ENCODE measurements at regions of chr19 and their contacts with region 1.

Region 1: DNA sequence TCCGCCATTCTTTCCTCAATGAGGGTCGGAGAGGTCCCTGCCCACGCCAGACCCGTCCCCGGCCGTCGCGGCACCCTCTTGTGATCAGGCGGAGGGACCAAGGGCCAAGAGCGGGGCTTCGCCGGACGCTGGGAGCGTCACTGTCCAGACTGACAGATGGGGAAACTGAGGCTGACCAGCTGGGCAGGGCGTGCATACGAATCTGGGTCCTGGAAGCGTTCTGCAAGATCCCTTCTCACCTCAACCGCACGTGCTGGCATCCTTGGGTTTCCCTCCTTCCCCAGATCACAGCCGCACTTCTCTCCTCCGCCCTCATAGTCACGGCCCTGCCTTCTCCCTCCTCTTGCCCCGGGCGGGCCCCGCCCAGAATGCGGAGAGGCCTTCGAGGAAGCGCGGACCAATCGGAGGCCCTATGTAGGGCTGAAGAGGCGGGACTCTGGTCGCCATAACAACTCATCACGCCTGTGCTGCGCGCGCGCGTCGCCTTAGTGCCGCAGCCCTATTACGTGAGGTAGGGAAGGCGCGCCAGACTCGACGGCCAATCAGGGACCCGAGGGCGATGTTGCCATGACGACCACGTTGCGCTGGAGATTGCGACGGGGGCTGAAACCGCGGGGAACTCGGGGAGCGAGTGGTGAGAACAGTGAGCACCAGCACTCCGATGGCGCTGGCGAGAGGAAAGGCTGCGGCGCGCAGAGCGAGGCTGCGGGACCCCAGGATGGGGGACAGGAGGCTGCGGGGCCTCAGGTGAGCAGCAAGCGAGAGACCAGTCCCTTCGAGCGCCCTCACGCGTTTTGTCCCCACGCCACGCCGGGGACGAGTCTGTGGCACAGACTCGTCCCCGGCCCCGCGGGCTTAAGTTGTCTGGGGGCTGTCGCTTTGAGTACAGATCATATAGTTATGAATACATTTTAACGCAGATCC is 5.7 kb downstream of the RNF225 start:
- DNase-seq: peak; percentile 100
- H3K4me3 ChIP-seq: peak overlapping the region; percentile 60 to 67 (median 65)
- H3K27ac ChIP-seq: peak overlapping the region; percentile 70 to 81 (median 70)
- H3K4me1 ChIP-seq: peaks cover 14 to 32% (median 27%) of the 10 kb centered on the region in 4 donors
- H3K27me3 ChIP-seq: peaks cover 0 to 18% (median 8%) of the 10 kb centered on the region in 4 donors
- CTCF ChIP-seq: peak in 1 of 3 experiments; percentile 17
- EP300 ChIP-seq: no peak
- POLR2A ChIP-seq: no peak

Region 2: GRCh38 chr19:58439576-58440554 is 38.7 kb after region 1 on chr19 and contains the start of gene ZNF132:
- intact Hi-C with region 1: loop called (anchors 5 kb)
- DNase-seq: peak; percentile 99
- H3K4me3 ChIP-seq: peak within 1 kb of the TSS; percentile 72 to 81 (median 74)
- H3K27ac ChIP-seq: peak within 1 kb of the TSS; percentile 81 to 85 (median 83)
- H3K4me1 ChIP-seq: peaks cover 16 to 24% (median 18%) of the 10 kb centered on the region in 4 donors
- H3K27me3 ChIP-seq: no peaks in the 10 kb centered on the region
- CTCF ChIP-seq: no peak
- EP300 ChIP-seq: no peak
- POLR2A ChIP-seq: no peak
- total RNA-seq, gene ZNF132: 3.7 to 6.7 (median 4.5) TPM

Region 3: DNA sequence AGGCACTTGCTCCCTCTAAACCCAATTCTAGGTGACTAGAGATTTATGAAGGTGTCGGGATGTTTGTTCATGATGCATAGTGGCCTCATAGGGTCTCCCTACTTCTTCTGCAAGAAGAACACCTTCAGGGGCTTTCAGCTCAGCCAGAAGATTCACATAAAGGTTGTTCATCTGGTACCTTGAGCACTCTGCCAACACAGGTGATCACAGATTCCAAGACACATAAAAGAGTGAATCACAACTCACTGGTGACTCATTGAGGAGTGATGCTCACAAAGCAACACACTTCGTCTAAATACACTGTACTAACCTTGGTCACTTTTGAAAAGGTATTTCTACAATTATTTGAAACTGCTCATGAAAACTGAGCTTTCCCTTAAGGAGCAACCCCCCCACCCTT is 58.9 kb after region 1 on chr19:
- intact Hi-C with region 1: no loop called
- DNase-seq: no peak
- H3K4me3 ChIP-seq: no peak overlapping the region
- H3K27ac ChIP-seq: no peak overlapping the region
- H3K4me1 ChIP-seq: no peaks in the 10 kb centered on the region
- H3K27me3 ChIP-seq: no peaks in the 10 kb centered on the region
- CTCF ChIP-seq: no peak
- EP300 ChIP-seq: no peak
- POLR2A ChIP-seq: no peak

Measured in esophagus muscularis mucosa (tissue), 4 donors.